WTC11 (cell line): ENCODE measurements at regions of chr1 and their contacts with region 1.

Region 1: GRCh38 chr1:61077676-61078541 is 4.5 kb upstream of the NFIA start:
- DNase-seq: peak; percentile 88
- ATAC-seq: peak; percentile 56
- H3K4me3 Mint-ChIP-seq: peak overlapping the region; percentile 87
- H3K27ac Mint-ChIP-seq: peak overlapping the region; percentile 94
- H3K4me1 Mint-ChIP-seq: peaks cover 44% of the 10 kb centered on the region
- H3K27me3 Mint-ChIP-seq: peaks cover 57% of the 10 kb centered on the region
- CTCF ChIP-seq: no peak

Region 2: DNA sequence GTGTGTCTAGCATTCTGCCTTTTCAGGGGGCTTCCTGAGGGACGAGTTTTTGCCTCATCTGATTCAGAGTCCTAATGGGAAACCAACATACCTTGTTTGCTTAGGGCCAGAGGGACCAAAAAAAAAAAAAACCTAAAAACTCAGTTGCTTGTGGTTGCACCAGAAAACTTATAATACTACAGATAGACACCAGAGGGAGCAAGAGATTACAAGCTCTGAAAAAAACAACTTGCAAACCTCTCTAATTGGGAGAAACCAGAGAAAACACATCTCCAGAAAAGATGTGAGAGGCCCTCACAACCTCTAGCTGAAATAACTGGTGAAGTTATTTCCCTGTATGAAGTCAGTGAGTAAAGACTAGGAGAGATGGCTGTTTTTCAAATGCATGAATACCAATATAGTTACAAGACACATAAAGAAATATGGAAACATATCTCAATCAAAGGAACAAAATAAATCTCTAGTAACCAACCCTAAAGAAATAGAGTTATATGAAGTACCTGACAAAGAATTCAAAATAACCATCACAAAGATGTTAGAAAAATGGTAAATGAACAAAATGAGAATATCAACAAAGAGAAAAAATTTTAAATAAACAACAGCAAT is 229.2 kb before region 1 on chr1:
- CTCF ChIA-PET with region 1: interaction called, 11 read pairs
- POLR2A ChIA-PET with region 1: interaction called, 4 read pairs
- DNase-seq: no peak
- ATAC-seq: peak; percentile 78
- H3K4me3 Mint-ChIP-seq: no peak overlapping the region
- H3K27ac Mint-ChIP-seq: peak overlapping the region; percentile 30
- H3K4me1 Mint-ChIP-seq: peaks cover 23% of the 10 kb centered on the region
- H3K27me3 Mint-ChIP-seq: no peaks in the 10 kb centered on the region
- CTCF ChIP-seq: peak; percentile 61

Region 3: DNA sequence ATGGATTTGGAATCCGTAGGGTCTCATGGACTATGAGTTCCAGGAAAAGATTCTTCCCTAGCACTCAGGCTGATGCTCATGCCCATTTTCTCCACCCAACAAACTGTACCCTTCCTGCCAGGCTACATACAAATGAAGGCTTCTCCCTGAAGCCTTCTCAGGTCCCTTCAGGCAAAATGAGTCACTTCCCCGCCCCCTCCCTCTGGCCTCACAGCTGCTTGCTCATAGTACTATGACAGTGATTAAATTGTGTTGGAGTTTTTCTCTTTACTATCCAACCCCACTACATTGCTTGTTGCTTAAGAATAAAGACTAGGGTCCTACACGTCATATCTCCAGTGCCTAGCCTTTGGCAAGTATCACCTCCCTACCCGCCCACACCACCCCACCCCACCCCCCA is 203.2 kb before region 1 on chr1:
- CTCF ChIA-PET with region 1: no interaction called
- POLR2A ChIA-PET with region 1: no interaction called
- DNase-seq: no peak
- ATAC-seq: no peak
- H3K4me3 Mint-ChIP-seq: no peak overlapping the region
- H3K27ac Mint-ChIP-seq: no peak overlapping the region
- H3K4me1 Mint-ChIP-seq: peaks cover 28% of the 10 kb centered on the region
- H3K27me3 Mint-ChIP-seq: no peaks in the 10 kb centered on the region
- CTCF ChIP-seq: no peak

Region 4: DNA sequence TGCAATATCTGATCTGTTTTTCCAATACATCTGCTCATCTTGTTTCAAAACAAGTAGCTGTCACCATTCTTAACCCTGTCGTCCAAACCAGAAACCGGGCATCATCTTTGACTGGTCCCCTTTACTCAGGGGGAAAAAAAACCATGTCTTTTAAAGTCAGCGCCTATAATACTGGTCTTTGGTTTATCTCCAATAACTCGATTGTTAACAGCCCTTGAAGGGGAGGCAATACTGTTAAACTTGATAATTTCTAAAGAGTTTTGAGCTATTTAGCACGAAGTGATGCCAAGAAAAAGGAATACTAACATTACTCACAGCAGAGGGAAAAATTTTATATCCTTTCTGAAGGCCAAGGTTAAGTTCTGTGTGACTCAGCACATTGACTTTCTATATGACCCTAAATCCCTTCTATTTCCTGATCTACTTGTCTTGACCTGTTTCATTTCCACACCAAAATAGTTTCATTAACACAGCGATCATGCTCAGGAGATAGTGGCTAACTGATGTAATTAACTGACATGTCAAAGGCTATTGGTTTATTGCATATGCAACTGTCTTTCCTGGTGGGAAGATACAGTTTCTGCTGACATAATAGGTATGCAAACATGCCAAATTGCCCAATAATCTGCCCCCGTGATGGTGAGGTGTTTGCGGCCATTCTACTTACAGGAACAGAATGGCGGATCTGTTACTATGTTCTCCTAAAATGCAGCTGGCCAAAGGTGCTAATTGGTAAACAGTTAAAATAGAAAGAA is 63.6 kb after region 1 on chr1:
- CTCF ChIA-PET with region 1: no interaction called
- POLR2A ChIA-PET with region 1: interaction called, 13 read pairs
- DNase-seq: no peak
- ATAC-seq: no peak; the same call in 1 of the 2 replicates
- H3K4me3 Mint-ChIP-seq: no peak overlapping the region
- H3K27ac Mint-ChIP-seq: peak overlapping the region; percentile 17
- H3K4me1 Mint-ChIP-seq: peaks cover 64% of the 10 kb centered on the region
- H3K27me3 Mint-ChIP-seq: no peaks in the 10 kb centered on the region; the same call in 1 of the 2 replicates
- CTCF ChIP-seq: no peak

Region 5: DNA sequence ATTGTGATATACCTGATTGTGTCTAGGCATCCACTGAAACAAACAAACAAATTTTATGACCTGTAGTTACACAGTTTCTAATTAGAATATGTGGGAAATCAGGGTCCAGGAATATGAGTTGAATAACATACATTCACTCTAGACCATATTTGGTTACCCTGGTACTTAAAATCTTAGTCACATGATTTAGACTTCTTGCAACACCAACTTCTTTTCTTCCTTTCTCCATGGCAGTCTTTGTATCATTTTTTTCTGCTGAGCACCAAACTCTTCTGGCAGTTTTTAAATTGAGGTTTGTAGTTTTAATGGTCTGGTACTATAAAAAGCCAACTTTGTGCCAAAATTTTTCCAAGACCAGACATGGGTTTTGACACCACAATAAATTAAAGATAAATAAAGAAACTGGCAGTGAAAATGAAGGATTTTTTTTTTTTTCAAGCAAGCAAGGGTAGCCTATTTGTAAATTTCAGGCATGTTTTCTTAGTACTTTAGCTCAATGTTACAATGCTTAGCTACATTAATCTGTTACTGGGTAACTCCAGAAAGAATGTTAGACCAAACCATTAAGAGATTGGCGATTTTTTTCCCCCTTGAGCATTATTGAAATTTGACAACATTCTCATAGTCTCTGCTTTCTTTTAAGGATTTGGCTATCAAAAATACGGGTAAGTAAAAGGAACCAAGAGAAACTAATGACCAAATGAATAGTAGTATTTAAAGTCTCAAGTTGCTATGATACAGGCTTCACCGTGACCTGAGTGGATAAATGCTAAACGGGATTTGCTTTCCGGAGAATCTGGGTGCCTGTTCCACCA is 112.9 kb after region 1 on chr1:
- CTCF ChIA-PET with region 1: no interaction called
- POLR2A ChIA-PET with region 1: no interaction called
- DNase-seq: no peak
- ATAC-seq: no peak
- H3K4me3 Mint-ChIP-seq: no peak overlapping the region
- H3K27ac Mint-ChIP-seq: no peak overlapping the region
- H3K4me1 Mint-ChIP-seq: peaks cover 26% of the 10 kb centered on the region
- H3K27me3 Mint-ChIP-seq: no peaks in the 10 kb centered on the region
- CTCF ChIP-seq: no peak

Region 6: GRCh38 chr1:61472876-61473275 is 395.0 kb after region 1 on chr1:
- CTCF ChIA-PET with region 1: no interaction called
- POLR2A ChIA-PET with region 1: no interaction called
- DNase-seq: no peak
- ATAC-seq: no peak
- H3K4me3 Mint-ChIP-seq: no peak overlapping the region
- H3K27ac Mint-ChIP-seq: no peak overlapping the region
- H3K4me1 Mint-ChIP-seq: no peaks in the 10 kb centered on the region
- H3K27me3 Mint-ChIP-seq: peaks cover 96% of the 10 kb centered on the region
- CTCF ChIP-seq: no peak